ENCODE measurements at regions of chr22 and their contacts with region 1.

Region 1: DNA sequence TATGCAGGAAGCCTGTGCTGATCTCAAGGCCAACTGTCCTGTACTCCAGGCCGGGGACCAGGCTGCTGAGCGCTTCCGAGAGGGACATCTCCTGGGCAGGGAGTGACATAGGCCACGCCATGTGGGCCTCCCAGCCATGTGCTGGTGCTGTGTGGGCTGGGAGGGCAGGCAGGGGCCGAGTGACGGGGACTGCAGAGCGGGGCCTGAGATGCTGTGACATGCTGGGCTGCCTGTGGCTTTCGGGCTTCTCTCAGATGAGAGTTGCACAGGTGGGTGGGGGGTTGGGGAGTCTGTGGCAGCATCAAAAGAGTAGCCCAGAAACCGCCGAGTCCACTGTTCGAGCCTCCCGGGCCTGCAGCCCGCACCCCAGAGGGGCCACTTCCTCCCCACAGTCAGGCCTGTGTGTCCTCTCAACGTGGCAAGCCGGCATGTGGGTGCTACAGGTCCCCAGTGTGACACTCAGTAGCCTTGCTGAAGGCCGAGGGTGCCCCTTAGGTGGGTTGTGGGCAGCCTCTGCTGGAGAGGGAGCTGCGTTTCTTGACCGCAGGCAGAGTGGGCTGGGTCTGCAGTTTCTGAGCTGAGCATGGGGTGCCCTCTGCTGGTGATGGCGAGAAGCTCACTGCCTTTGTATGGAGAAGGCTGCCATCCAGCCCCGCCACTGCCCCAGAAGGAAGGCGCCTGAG is 101.2 kb downstream of the BCR start:
- DNase-seq: peak; percentile 99 to 100 (median 100)
- ATAC-seq: peak; percentile 95
- H3K4me3 ChIP-seq: no peak overlapping the region
- H3K27ac ChIP-seq: no peak overlapping the region
- H3K4me1 ChIP-seq: peaks cover 0 to 27% of the 10 kb centered on the region in 2 experiments; a peak in 2 of 5 replicates
- H3K27me3 ChIP-seq: no peaks in the 10 kb centered on the region
- CTCF ChIP-seq: peak in 2 of 3 experiments; percentile 99 to 100; a peak in 4 of 6 replicates
- EP300 ChIP-seq: no peak
- POLR2A ChIP-seq: no peak
- RAD21 ChIP-seq: peak in 1 of 2 experiments; percentile 100; a peak in 2 of 4 replicates

Region 2: DNA sequence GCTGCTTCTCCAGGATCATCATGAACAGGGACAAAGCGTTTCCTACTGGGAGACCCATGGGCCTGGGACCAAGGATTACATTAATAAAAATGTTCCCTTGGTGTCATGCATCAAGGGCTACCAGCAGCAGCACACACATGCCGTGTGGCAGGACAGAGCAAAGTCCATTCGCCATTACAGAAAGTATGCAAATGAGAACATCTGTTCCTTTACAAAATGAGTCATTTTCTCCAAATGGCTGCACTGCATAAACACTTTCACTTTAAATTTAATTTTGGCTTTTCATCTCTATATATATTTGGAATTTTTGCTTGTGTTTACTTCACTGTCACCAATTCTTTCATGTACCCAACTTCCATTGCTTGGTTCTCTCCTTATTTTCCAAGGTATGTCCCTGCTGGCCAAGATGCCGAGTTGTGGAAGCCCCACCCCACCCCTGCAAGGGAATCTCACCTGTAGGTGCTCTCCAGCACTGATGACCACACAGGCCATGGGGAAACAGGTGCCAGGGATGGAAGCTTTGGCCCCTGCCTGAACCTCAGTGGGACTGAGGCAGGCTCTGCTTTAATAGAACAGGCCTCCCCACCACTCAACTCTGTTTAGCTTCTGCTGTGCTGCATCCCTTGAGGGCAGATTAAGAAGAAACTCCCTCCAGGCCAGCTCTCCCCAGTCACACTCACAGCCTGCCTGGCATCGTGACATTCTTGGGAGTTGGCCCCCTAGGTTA is 226.9 kb before region 1 on chr22:
- CTCF ChIA-PET with region 1: no interaction called
- POLR2A ChIA-PET with region 1: no interaction called
- in situ Hi-C with region 1: no loop called
- intact Hi-C with region 1: no loop called
- DNase-seq: peak in 1 of 4 experiments; percentile 55
- ATAC-seq: no peak
- H3K4me3 ChIP-seq: no peak overlapping the region
- H3K27ac ChIP-seq: no peak overlapping the region
- H3K4me1 ChIP-seq: peaks cover 0 to 3% of the 10 kb centered on the region in 2 experiments; a peak in 1 of 5 replicates
- H3K27me3 ChIP-seq: peaks cover 9 to 36% of the 10 kb centered on the region in 2 experiments; a peak in 4 of 5 replicates
- CTCF ChIP-seq: no peak
- EP300 ChIP-seq: no peak
- POLR2A ChIP-seq: no peak
- RAD21 ChIP-seq: no peak

Region 3: DNA sequence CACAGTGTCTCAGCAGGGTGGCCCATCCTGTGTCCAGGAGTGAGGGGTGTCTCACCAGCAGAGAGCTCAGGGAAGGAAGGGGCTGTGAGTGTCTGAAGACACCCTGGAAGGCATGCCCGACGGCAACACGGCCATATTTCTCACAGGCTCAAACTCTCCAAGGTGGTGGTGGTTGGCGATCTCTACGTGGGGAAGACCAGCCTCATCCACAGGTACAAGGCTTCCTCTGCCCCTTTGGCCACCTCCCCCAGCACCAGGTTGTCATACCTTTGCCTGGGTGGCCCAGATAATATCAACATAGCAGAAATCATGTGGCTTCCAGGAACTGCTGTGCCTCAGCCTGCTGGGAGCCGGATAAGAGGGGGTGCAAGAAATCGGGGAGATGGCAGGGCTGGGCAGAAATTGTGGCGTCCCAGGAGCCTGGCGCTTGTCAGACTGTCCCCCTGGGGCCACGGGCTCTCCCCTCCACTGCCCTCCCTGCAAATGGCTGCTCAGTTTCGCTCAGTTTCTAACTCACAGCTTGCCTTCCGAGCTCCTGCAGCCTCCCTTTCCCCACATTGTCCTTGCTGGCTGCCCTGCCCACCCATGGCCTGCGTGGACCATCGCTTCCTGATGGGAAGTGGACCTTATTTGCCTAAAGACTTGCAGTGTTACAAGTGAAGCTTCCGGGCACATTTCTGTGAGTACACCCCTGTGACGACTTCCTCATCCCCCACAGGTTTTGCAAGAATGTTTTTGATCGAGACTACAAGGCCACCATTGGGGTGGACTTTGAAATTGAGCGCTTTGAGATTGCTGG is 129.0 kb before region 1 on chr22:
- CTCF ChIA-PET with region 1: interaction called, 16 read pairs
- POLR2A ChIA-PET with region 1: interaction called, 15 read pairs
- in situ Hi-C with region 1: no loop called
- intact Hi-C with region 1: no loop called
- DNase-seq: peak in 1 of 4 experiments; percentile 62
- ATAC-seq: peak; percentile 2
- H3K4me3 ChIP-seq: no peak overlapping the region
- H3K27ac ChIP-seq: no peak overlapping the region
- H3K4me1 ChIP-seq: peaks cover 4 to 33% of the 10 kb centered on the region in 2 experiments; a peak in 4 of 5 replicates
- H3K27me3 ChIP-seq: peaks cover 80 to 94% of the 10 kb centered on the region in 2 experiments
- CTCF ChIP-seq: no peak
- EP300 ChIP-seq: no peak
- POLR2A ChIP-seq: no peak
- RAD21 ChIP-seq: no peak

Region 4: DNA sequence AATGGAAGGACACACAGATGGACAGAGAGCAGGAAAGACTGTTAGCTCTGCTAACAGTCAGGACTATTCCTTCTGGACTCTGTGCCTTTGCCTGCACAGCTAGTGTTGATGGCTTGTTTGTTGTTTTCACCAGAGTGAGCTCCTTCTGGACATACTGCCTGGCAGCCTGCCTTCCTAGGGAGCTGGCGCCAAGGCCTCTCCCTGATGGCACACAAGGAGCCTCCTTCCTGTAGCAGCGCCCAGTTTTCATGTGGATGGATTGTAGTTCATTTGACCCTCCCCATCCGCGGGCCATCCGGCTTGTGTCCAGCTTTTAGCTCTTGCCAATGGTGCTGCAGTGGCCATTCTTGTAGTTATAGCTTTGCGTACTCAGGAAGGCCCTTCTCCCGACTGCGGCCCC is 117.9 kb before region 1 on chr22:
- CTCF ChIA-PET with region 1: no interaction called
- POLR2A ChIA-PET with region 1: interaction called, 10 read pairs
- in situ Hi-C with region 1: no loop called
- intact Hi-C with region 1: no loop called
- DNase-seq: no peak
- ATAC-seq: no peak
- H3K4me3 ChIP-seq: no peak overlapping the region
- H3K27ac ChIP-seq: no peak overlapping the region
- H3K4me1 ChIP-seq: peaks cover 0 to 10% of the 10 kb centered on the region in 2 experiments; a peak in 3 of 5 replicates
- H3K27me3 ChIP-seq: peaks cover 76 to 89% of the 10 kb centered on the region in 2 experiments
- CTCF ChIP-seq: no peak
- EP300 ChIP-seq: no peak
- POLR2A ChIP-seq: no peak
- RAD21 ChIP-seq: no peak

Region 5: GRCh38 chr22:23219822-23220484 is 61.6 kb before region 1 on chr22:
- CTCF ChIA-PET with region 1: interaction called, 4 read pairs
- POLR2A ChIA-PET with region 1: interaction called, 7 read pairs
- in situ Hi-C with region 1: no loop called
- intact Hi-C with region 1: loop called (anchors 2 kb)
- DNase-seq: peak in 2 of 4 experiments; percentile 90 to 94
- ATAC-seq: peak; percentile 54
- H3K4me3 ChIP-seq: no peak overlapping the region
- H3K27ac ChIP-seq: peak overlapping the region; percentile 6; the same call in 2 of the 3 replicates
- H3K4me1 ChIP-seq: peaks cover 77 to 78% of the 10 kb centered on the region in 2 experiments
- H3K27me3 ChIP-seq: no peaks in the 10 kb centered on the region
- CTCF ChIP-seq: no peak
- EP300 ChIP-seq: no peak
- POLR2A ChIP-seq: no peak
- RAD21 ChIP-seq: no peak

Region 6: DNA sequence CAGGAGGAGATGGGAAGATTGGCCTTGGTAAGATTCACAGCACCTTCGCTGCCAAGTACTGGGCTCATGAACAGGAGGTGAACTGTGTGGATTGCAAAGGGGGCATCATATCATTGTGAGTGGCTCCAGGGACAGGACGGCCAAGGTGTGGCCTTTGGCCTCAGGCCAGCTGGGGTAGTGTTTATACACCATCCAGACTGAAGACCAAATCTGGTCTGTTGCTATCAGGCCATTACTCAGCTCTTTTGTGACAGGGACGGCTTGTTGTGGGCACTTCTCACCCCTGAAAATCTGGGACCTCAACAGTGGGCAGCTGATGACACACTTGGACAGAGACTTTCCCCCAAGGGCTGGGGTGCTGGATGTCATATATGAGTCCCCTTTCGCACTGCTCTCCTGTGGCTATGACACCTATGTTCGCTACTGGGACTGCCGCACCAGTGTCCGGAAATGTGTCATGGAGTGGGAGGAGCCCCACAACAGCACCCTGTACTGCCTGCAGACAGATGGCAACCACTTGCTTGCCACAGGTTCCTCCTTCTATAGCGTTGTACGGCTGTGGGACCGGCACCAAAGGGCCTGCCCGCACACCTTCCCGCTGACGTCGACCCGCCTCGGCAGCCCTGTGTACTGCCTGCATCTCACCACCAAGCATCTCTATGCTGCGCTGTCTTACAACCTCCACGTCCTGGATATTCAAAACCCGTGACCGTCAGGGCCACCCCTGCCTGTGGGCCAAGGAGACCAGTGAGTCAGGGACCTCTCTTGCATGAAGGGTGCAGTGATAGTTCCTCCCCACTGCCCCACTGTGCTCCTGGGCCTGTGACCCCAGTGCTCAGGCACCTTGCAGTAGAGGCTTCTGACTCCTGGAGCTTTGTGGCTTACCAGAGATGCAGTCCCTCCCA is 17.6 kb before region 1 on chr22:
- CTCF ChIA-PET with region 1: no interaction called
- POLR2A ChIA-PET with region 1: interaction called, 50 read pairs
- in situ Hi-C with region 1: no loop called
- intact Hi-C with region 1: no loop called
- DNase-seq: peak in 2 of 4 experiments; percentile 58 to 60
- ATAC-seq: peak; percentile 7
- H3K4me3 ChIP-seq: no peak overlapping the region
- H3K27ac ChIP-seq: no peak overlapping the region
- H3K4me1 ChIP-seq: peaks cover 0 to 35% of the 10 kb centered on the region in 2 experiments; a peak in 1 of 5 replicates
- H3K27me3 ChIP-seq: no peaks in the 10 kb centered on the region
- CTCF ChIP-seq: no peak; a peak in 1 of 6 replicates
- EP300 ChIP-seq: no peak
- POLR2A ChIP-seq: no peak
- RAD21 ChIP-seq: no peak

Region 7: DNA sequence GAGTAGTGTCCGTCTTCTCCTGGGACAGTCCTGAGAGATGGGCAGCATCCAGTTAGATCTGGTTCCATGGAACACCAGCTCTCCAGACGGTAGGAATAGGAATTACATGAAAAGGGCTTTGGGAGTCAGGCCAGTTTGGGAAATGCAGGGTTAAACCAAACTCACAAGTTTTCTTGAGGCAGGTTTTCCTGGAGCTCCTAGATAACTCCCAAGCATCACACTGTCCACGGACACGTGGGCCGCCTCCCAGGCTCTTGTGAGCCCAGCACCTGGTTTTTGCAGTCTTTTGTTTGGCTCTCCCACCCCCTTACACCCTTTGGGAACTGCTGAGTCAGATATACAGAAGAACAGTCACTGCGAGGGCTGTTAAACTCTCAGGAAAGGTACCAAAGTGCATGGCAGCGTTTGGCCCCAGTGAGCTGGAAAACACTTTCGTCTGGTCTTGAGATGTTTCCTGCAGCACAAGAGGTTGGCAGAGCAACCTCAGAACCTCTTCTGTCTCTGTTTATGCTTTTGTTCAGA is 11.3 kb before region 1 on chr22:
- CTCF ChIA-PET with region 1: interaction called, 15 read pairs
- POLR2A ChIA-PET with region 1: interaction called, 50 read pairs
- in situ Hi-C with region 1: no loop called
- intact Hi-C with region 1: no loop called
- DNase-seq: peak in 3 of 4 experiments; percentile 61 to 82 (median 77)
- ATAC-seq: peak; percentile 31
- H3K4me3 ChIP-seq: no peak overlapping the region
- H3K27ac ChIP-seq: no peak overlapping the region
- H3K4me1 ChIP-seq: peaks cover 4 to 34% of the 10 kb centered on the region in 2 experiments; a peak in 4 of 5 replicates
- H3K27me3 ChIP-seq: no peaks in the 10 kb centered on the region
- CTCF ChIP-seq: peak in 2 of 3 experiments; percentile 75 to 87; a peak in 4 of 6 replicates
- EP300 ChIP-seq: no peak
- POLR2A ChIP-seq: no peak
- RAD21 ChIP-seq: peak in 1 of 2 experiments; percentile 82; a peak in 2 of 4 replicates

Region 8: GRCh38 chr22:23315341-23315917 is 33.9 kb after region 1 on chr22:
- CTCF ChIA-PET with region 1: no interaction called
- POLR2A ChIA-PET with region 1: no interaction called
- in situ Hi-C with region 1: no loop called
- intact Hi-C with region 1: no loop called
- DNase-seq: peak; percentile 80 to 87 (median 82)
- ATAC-seq: peak; percentile 48; the same call in 1 of the 3 replicates
- H3K4me3 ChIP-seq: no peak overlapping the region
- H3K27ac ChIP-seq: no peak overlapping the region
- H3K4me1 ChIP-seq: peaks cover 0 to 2% of the 10 kb centered on the region in 2 experiments; a peak in 1 of 5 replicates
- H3K27me3 ChIP-seq: no peaks in the 10 kb centered on the region
- CTCF ChIP-seq: peak; percentile 67 to 70 (median 68)
- EP300 ChIP-seq: no peak
- POLR2A ChIP-seq: no peak
- RAD21 ChIP-seq: no peak

Region 9: DNA sequence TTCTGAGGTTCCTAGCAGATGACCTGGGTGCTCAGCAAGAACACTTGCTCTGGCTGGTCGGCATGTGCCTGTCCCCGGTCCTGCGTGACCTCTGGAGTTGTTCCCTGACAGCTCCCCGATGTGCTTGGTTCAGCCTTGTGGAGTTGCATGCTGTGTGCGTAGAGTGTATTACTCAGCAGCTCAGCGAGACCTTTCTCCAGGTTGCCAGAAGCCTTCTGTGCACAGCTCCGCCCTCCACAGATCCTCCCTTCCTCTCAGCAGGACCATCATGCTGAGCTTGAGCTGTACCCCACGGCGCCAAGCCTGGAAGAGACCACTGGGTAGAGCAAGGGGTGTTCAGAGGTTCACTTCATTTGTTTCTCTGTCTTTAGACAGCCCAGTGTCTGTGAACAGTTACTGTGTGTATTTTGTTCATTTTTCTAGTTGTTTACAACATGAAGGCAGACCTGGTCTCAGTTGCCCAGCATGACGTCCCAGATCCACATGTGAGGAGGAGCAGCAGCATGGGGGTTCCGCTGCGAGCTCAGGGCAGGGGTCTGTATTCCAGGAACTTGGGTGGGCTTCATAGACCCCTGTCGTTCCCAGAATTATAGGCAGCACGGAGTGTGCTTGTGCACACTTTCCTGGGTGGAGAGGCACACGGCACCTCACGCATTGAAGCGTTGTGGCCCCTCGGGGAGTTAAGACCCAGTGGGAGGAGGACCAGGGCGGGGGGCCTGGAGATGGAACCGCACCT is 150.0 kb after region 1 on chr22:
- CTCF ChIA-PET with region 1: no interaction called
- POLR2A ChIA-PET with region 1: no interaction called
- in situ Hi-C with region 1: no loop called
- intact Hi-C with region 1: no loop called
- DNase-seq: peak; percentile 40 to 67 (median 52)
- ATAC-seq: peak; percentile 86
- H3K4me3 ChIP-seq: no peak overlapping the region
- H3K27ac ChIP-seq: peak overlapping the region; percentile 8; the same call in 1 of the 3 replicates
- H3K4me1 ChIP-seq: peaks cover 10 to 25% of the 10 kb centered on the region in 2 experiments; a peak in 3 of 5 replicates
- H3K27me3 ChIP-seq: no peaks in the 10 kb centered on the region
- CTCF ChIP-seq: no peak
- EP300 ChIP-seq: no peak
- POLR2A ChIP-seq: no peak
- RAD21 ChIP-seq: no peak

Measured in K562 (cell line).